ENCODE measurements at regions of chr3 and their contacts with region 1.

Region 1: GRCh38 chr3:51371943-51372557 is 13.0 kb upstream of the MANF start:
- DNase-seq: peak in 4 of 5 donors; percentile 51 to 58 (median 52)
- H3K4me3 ChIP-seq: no peak overlapping the region
- H3K4me3 Mint-ChIP-seq: no peak overlapping the region
- H3K27ac ChIP-seq: no peak overlapping the region
- H3K27ac Mint-ChIP-seq: no peak overlapping the region
- H3K4me1 ChIP-seq: no peaks in the 10 kb centered on the region
- H3K4me1 Mint-ChIP-seq: peaks cover 0 to 2% (median 0%) of the 10 kb centered on the region in 4 donors
- H3K27me3 ChIP-seq: no peaks in the 10 kb centered on the region
- H3K27me3 Mint-ChIP-seq: peaks cover 2 to 10% of the 10 kb centered on the region in 2 donors

Region 2: GRCh38 chr3:50674349-50675178 is 697.5 kb before region 1 on chr3 and contains the start of gene DOCK3:
- CTCF ChIA-PET with region 1: interaction called, 4 read pairs
- POLR2A ChIA-PET with region 1: no interaction called
- intact Hi-C with region 1: loop called (anchors 1 kb)
- DNase-seq: peak; percentile 49 to 72 (median 70)
- H3K4me3 ChIP-seq: peak within 1 kb of the TSS in 1 of 2 donors; percentile 44
- H3K4me3 Mint-ChIP-seq: peak within 1 kb of the TSS; percentile 55 to 89 (median 82)
- H3K27ac ChIP-seq: no peak within 1 kb of the TSS
- H3K27ac Mint-ChIP-seq: peak within 1 kb of the TSS in 6 of 7 donors; percentile 4 to 76 (median 32)
- H3K4me1 ChIP-seq: peaks cover 9% of the 10 kb centered on the region
- H3K4me1 Mint-ChIP-seq: peaks cover 2 to 9% (median 6%) of the 10 kb centered on the region in 4 donors
- H3K27me3 ChIP-seq: peaks cover 4% of the 10 kb centered on the region
- H3K27me3 Mint-ChIP-seq: peaks cover 7 to 8% of the 10 kb centered on the region in 2 donors
- total RNA-seq, gene DOCK3: 2.5 to 2.6 TPM

Region 3: DNA sequence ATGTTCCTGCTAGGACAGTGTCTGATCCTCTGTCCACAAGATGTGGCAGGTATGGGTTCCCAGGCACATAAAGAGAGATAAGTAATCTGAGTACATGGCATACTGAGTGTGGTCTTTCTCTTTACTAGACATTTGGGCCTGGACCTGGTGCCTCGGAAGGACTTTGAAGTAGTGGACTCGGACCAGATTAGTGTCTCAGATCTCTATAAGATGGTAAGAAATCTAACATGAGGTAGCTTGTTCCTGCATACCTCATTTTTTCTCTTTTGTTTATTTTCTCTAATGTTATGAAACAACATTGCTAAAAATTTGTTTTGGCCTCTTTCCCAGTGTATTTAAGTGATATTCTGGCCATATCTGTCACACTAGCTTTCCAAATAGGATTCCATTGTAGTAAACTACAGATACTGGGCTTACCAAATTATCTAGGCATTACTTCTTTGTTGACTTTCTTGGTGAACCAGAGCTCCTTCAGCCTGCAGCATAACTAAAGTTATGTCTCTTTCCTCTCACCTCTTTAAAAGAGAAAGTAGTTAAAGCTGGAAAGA is 296.7 kb before region 1 on chr3:
- CTCF ChIA-PET with region 1: no interaction called
- POLR2A ChIA-PET with region 1: no interaction called
- intact Hi-C with region 1: no loop called
- DNase-seq: no peak
- H3K4me3 ChIP-seq: no peak overlapping the region
- H3K4me3 Mint-ChIP-seq: no peak overlapping the region
- H3K27ac ChIP-seq: no peak overlapping the region
- H3K27ac Mint-ChIP-seq: peak overlapping the region in 1 of 7 donors; percentile 12
- H3K4me1 ChIP-seq: no peaks in the 10 kb centered on the region
- H3K4me1 Mint-ChIP-seq: no peaks in the 10 kb centered on the region
- H3K27me3 ChIP-seq: no peaks in the 10 kb centered on the region
- H3K27me3 Mint-ChIP-seq: no peaks in the 10 kb centered on the region

Region 4: DNA sequence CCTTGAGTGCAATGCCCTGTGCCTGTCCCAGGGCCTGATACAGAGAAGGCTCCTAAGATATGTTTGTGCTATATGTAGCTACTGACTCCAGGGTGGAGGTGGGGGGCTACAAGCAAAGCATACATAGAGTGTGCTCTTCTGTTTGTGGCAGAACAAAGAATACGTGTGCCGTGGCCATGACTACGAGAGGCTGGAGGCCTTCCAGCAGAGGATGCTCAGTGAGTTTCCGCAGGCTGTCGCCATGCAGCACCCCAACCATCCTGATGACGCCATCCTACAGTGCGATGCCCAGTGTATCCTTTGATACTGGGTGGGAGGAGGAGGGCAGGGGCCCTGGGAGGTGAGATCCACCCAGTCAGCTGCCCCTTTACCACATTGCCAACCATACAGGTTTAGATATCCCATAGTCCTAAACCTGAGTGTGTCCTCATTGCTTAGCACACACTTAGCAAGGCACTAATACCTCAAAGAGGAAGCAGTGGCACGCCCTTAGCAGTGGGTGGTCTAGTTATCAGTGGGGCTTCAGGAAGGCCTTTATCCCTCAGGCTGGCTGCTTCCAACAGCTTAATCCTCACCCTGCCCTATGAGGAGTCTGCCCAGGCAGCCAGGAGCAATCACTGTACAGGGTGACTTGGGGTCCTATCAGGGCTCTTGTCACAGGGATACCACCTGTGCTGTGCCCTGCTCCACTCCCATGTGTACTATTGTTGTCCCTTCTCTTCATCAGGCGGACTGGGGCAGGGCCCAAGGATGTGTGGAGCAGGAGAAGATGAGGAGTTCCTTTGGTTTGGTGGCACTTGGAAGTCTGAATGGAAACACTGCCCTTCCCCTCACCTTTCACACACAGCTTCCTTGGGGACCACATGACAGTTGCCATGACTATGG is 17.1 kb before region 1 on chr3:
- CTCF ChIA-PET with region 1: no interaction called
- POLR2A ChIA-PET with region 1: no interaction called
- intact Hi-C with region 1: no loop called
- DNase-seq: no peak
- H3K4me3 ChIP-seq: no peak overlapping the region
- H3K4me3 Mint-ChIP-seq: no peak overlapping the region
- H3K27ac ChIP-seq: no peak overlapping the region
- H3K27ac Mint-ChIP-seq: no peak overlapping the region
- H3K4me1 ChIP-seq: no peaks in the 10 kb centered on the region
- H3K4me1 Mint-ChIP-seq: peaks cover 0 to 5% (median 2%) of the 10 kb centered on the region in 4 donors
- H3K27me3 ChIP-seq: no peaks in the 10 kb centered on the region
- H3K27me3 Mint-ChIP-seq: no peaks in the 10 kb centered on the region

Region 5: DNA sequence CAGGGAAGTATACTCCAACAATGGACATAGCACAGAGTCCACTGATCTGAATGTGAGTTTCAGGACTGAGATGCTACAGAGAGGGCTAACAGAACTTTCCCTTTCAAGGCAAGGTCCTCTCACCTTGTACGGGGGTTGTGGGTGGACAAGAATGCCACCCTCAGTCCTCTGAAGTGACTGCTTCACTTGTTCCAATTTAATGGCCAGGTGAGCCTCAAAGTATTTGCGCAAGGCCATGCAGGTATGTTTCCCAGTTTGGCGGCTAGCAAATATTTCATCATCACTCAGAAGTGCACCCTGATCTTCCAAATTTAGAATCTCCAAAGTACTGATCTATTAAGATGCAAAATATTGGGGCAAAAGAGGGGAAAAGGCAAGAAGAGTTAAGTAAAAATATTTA is 57.1 kb after region 1 on chr3:
- CTCF ChIA-PET with region 1: no interaction called
- POLR2A ChIA-PET with region 1: no interaction called
- intact Hi-C with region 1: no loop called
- DNase-seq: no peak
- H3K4me3 ChIP-seq: no peak overlapping the region
- H3K4me3 Mint-ChIP-seq: no peak overlapping the region
- H3K27ac ChIP-seq: no peak overlapping the region
- H3K27ac Mint-ChIP-seq: peak overlapping the region in 1 of 7 donors; percentile 59
- H3K4me1 ChIP-seq: no peaks in the 10 kb centered on the region
- H3K4me1 Mint-ChIP-seq: no peaks in the 10 kb centered on the region
- H3K27me3 ChIP-seq: no peaks in the 10 kb centered on the region
- H3K27me3 Mint-ChIP-seq: no peaks in the 10 kb centered on the region

Region 6: GRCh38 chr3:51670823-51671733 is 299.0 kb after region 1 on chr3 and contains the start of gene TEX264:
- CTCF ChIA-PET with region 1: no interaction called
- POLR2A ChIA-PET with region 1: no interaction called
- intact Hi-C with region 1: no loop called
- DNase-seq: peak; percentile 95 to 97 (median 96)
- H3K4me3 ChIP-seq: peak within 1 kb of the TSS; percentile 88 to 89
- H3K4me3 Mint-ChIP-seq: peak within 1 kb of the TSS; percentile 88 to 95 (median 92)
- H3K27ac ChIP-seq: peak within 1 kb of the TSS; percentile 83
- H3K27ac Mint-ChIP-seq: peak within 1 kb of the TSS; percentile 95 to 97 (median 97)
- H3K4me1 ChIP-seq: peaks cover 66% of the 10 kb centered on the region
- H3K4me1 Mint-ChIP-seq: peaks cover 54 to 74% (median 63%) of the 10 kb centered on the region in 4 donors
- H3K27me3 ChIP-seq: no peaks in the 10 kb centered on the region
- H3K27me3 Mint-ChIP-seq: no peaks in the 10 kb centered on the region
- total RNA-seq, gene TEX264: 40.0 to 40.9 TPM

Measured in CD4-positive, alpha-beta memory T cell (primary cell).